Pancreas (tissue), 10 donors: ENCODE measurements at regions of chr9 and their contacts with region 1.

Region 1: GRCh38 chr9:96854073-96854876 is at the start of gene ZNF782:
- DNase-seq: peak; percentile 89 to 95 (median 92)
- ATAC-seq: peak; percentile 88 to 97 (median 94)
- H3K4me3 ChIP-seq: peak within 1 kb of the TSS; percentile 76 to 86 (median 81)
- H3K27ac ChIP-seq: peak within 1 kb of the TSS; percentile 76 to 84 (median 78)
- H3K4me1 ChIP-seq: peaks cover 5 to 35% (median 29%) of the 10 kb centered on the region in 3 donors
- H3K27me3 ChIP-seq: no peaks in the 10 kb centered on the region
- CTCF ChIP-seq: no peak
- total RNA-seq, gene ZNF782: 3.0 to 6.8 (median 5.1) TPM

Region 2: DNA sequence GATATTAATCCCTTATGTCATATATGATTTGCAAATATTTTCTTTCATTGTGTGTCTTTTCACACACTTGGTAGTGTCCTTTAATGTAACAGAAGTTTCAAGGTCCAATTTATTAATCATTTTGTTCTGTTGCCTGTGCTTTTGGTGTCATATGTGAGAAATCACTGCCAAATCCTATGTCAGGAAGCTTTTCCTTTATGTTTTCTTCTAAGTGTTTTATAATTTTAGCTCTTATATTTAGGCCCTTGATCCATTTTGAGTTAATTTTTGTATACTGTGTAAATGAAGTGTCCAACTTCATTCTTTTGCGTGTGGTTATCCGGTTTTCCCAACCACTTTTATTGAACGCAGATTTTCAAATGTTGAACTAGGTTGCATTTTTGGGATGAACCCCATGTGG is 70.3 kb before region 1 on chr9:
- intact Hi-C with region 1: no loop called
- DNase-seq: no peak
- ATAC-seq: no peak
- H3K4me3 ChIP-seq: no peak overlapping the region
- H3K27ac ChIP-seq: no peak overlapping the region
- H3K4me1 ChIP-seq: peaks cover 0 to 4% (median 0%) of the 10 kb centered on the region in 3 donors
- H3K27me3 ChIP-seq: no peaks in the 10 kb centered on the region
- CTCF ChIP-seq: no peak

Region 3: GRCh38 chr9:97096793-97097192 is 242.5 kb after region 1 on chr9:
- intact Hi-C with region 1: no loop called
- DNase-seq: no peak
- ATAC-seq: no peak
- H3K4me3 ChIP-seq: no peak overlapping the region
- H3K27ac ChIP-seq: no peak overlapping the region
- H3K4me1 ChIP-seq: no peaks in the 10 kb centered on the region
- H3K27me3 ChIP-seq: no peaks in the 10 kb centered on the region
- CTCF ChIP-seq: no peak

Region 4: DNA sequence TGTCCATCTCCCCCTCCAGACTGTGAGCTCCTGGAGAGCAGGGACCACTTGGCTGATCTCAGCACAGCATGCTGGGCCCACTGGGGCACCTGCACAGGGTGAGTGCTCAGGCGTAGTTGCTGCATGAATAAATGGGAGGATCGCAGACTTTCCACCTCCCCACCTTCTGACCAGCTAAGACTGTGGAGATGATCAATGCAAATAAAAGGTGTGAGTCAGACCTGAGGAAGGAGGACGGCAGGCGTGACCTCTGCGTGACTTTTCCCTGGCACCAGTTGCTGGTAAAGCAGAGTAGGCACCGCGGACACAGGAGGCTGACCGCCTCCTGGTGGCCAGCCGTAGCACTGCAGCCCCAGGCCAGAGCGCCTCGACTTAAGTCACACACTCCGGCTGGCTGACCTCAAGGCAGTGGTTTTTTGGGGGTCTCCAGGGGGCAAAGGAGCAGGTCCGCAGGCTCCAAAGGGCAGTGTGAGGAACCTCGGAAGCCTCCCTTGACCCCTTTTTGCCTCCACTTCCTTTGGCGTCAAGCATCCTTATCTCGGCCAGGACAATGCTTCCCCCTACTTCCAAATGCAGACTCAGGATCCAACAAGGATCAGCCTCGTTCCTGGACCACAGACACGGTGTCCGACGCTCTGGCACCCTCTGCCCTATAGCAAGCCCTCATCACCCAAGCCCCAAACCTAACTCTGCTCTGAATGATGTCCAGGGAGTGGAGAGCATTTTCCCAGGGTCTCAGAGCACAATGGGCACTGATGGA is 544.9 kb after region 1 on chr9:
- intact Hi-C with region 1: loop called in 2 of 3 experiments (anchors 10 kb)
- DNase-seq: peak; percentile 65 to 94 (median 88)
- ATAC-seq: peak; percentile 94 to 99 (median 98)
- H3K4me3 ChIP-seq: no peak overlapping the region
- H3K27ac ChIP-seq: no peak overlapping the region
- H3K4me1 ChIP-seq: no peaks in the 10 kb centered on the region
- H3K27me3 ChIP-seq: no peaks in the 10 kb centered on the region
- CTCF ChIP-seq: peak; percentile 96 to 98 (median 97)

Region 5: GRCh38 chr9:97406620-97407177 is 552.4 kb after region 1 on chr9:
- intact Hi-C with region 1: loop called in 1 of 3 experiments (anchors 10 kb)
- DNase-seq: no peak
- ATAC-seq: peak in 2 of 4 donors; percentile 20 to 33
- H3K4me3 ChIP-seq: no peak overlapping the region
- H3K27ac ChIP-seq: no peak overlapping the region
- H3K4me1 ChIP-seq: peaks cover 0 to 8% (median 7%) of the 10 kb centered on the region in 3 donors
- H3K27me3 ChIP-seq: no peaks in the 10 kb centered on the region
- CTCF ChIP-seq: no peak

Region 6: GRCh38 chr9:98263482-98264357 is 1409.4 kb after region 1 on chr9:
- intact Hi-C with region 1: no loop called
- DNase-seq: peak; percentile 54 to 84 (median 70)
- ATAC-seq: peak; percentile 86 to 100 (median 98)
- H3K4me3 ChIP-seq: no peak overlapping the region
- H3K27ac ChIP-seq: no peak overlapping the region
- H3K4me1 ChIP-seq: no peaks in the 10 kb centered on the region
- H3K27me3 ChIP-seq: no peaks in the 10 kb centered on the region
- CTCF ChIP-seq: peak; percentile 43 to 92 (median 80)